Activated T-helper 2 cell treated with anti-CD3 and anti-CD28 coated beads, Interferon-gamma antibody, Interleukin-2, Interleukin-4, amounts not matched to agents 10 μg/mL and 5 μg/mL and 100 μg/mL, durations not matched to agents 14 hours and 24 hours and 36 hours (primary cell): ENCODE measurements at regions of chr6 and their contacts with region 1.

Region 1: DNA sequence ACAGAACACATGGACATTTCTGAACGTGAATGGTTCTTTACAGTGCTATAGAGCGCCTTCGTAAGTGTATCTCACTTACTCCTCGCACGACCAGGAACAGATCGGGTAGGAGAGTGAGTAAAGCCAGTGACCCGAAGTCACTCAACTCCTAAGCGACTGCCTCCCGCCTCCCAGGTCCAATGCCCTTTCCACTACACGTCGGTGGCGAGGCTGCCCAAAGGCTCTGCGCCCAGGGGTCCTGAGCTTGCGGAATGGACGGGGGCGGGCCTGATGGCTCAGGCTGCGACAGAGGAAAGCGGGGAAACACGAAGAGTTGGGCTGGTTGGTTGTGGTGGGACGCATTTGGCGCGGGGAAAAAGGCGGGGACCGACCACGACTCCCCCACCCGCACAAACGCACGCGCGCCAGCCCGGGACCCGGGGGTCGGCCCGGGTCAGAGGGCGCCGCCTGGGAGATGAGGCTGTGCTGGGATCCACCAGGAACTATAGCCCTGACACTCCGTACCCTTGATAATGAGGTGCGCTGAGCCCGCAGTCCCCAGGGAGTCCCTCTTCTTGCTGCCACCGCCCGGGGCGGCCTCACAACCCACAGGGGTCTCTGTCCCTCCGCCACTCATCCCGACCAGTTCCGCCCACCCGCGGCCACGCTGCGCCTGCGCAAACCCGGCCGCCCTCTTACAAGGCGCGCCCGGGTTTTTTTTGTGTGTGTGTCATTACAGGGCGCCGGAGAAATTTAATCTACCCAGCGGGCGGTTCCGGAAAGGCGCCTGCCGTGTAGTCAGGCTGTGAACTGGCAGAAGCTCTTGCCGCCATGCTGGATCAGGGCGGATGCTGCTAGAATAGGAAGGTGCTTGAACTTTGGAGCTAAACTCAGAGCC is at the start of gene BLOC1S5:
- DNase-seq: peak; percentile 95
- H3K4me3 Mint-ChIP-seq: peak within 1 kb of the TSS; percentile 95
- H3K27ac Mint-ChIP-seq: peak within 1 kb of the TSS; percentile 98
- H3K4me1 Mint-ChIP-seq: peaks cover 34% of the 10 kb centered on the region
- H3K27me3 Mint-ChIP-seq: no peaks in the 10 kb centered on the region
- total RNA-seq, gene BLOC1S5: 21.2 and 25.4 TPM in 2 replicates

Region 2: GRCh38 chr6:7312616-7313504 is 751.1 kb before region 1 on chr6 and contains the start of gene SSR1:
- intact Hi-C with region 1: loop called (anchors 2 kb)
- DNase-seq: peak; percentile 95
- H3K4me3 Mint-ChIP-seq: peak within 1 kb of the TSS; percentile 100
- H3K27ac Mint-ChIP-seq: peak within 1 kb of the TSS; percentile 99
- H3K4me1 Mint-ChIP-seq: peaks cover 28% of the 10 kb centered on the region
- H3K27me3 Mint-ChIP-seq: no peaks in the 10 kb centered on the region
- total RNA-seq, gene SSR1: 196 and 203 TPM in 2 replicates

Region 3: GRCh38 chr6:7589949-7590917 is 473.8 kb before region 1 on chr6 and contains the start of gene SNRNP48:
- intact Hi-C with region 1: loop called (anchors 1 kb)
- DNase-seq: peak; percentile 88
- H3K4me3 Mint-ChIP-seq: peak within 1 kb of the TSS; percentile 94
- H3K27ac Mint-ChIP-seq: peak within 1 kb of the TSS; percentile 92
- H3K4me1 Mint-ChIP-seq: peaks cover 28% of the 10 kb centered on the region
- H3K27me3 Mint-ChIP-seq: peaks cover 2% of the 10 kb centered on the region
- total RNA-seq, gene SNRNP48: 16.8 and 17.7 TPM in 2 replicates

Region 4: DNA sequence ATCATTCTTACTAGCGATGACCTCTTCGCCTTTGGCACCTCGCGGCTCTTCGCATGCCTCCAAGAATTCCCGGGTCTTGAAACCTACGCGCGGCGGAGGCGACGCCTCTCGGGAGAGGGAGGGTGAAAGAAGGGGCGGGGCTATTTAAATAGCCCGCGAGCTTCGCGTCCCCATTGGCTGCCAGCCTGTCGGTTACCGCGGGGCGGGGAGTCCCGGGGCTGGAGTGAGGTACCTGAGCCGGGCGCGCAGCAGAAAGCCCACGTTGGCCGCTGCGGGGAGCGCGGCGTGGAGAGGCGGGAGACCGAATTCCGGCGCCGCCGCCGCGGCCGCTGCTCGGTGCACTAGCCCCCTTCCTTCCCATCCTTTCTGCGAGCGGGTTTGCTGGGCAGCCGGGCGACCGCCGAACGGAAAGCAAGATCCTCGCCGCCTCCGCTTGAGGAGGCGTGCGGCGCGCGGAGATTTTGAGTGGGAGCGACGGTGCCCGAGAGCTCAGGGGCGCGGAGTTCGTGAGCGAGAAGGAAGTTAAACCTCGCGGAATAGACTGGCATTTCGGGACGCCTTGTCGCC is 338.1 kb before region 1 on chr6 and contains the start of gene BMP6:
- intact Hi-C with region 1: loop called (anchors 1 kb)
- DNase-seq: peak; percentile 71
- H3K4me3 Mint-ChIP-seq: peak within 1 kb of the TSS; percentile 78
- H3K27ac Mint-ChIP-seq: no peak within 1 kb of the TSS
- H3K4me1 Mint-ChIP-seq: peaks cover 23% of the 10 kb centered on the region
- H3K27me3 Mint-ChIP-seq: peaks cover 69% of the 10 kb centered on the region
- total RNA-seq, gene BMP6: 0.78 and 1.1 TPM in 2 replicates

Region 5: DNA sequence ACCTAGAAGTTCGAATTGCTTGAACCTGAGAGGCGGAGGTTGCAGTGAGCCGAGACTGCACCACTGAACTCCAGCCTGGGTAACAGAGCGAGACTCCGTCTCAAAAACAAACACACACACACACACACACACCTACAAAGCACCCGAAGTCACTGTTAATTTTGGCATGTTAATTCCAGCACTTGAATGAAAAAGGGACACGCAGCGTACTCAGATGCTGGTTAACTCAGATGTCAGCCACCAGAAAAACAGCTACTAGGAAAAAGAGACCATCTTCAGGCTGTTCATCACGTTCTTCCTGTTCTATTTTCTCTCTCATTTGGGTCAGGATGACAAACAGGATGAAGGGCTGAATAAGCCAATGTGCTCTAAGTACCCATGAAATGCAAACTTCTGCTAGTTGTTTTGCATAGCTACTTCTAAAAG is 46.7 kb before region 1 on chr6:
- intact Hi-C with region 1: loop called (anchors 5 kb)
- DNase-seq: no peak
- H3K4me3 Mint-ChIP-seq: peak overlapping the region; percentile 80
- H3K27ac Mint-ChIP-seq: peak overlapping the region; percentile 96
- H3K4me1 Mint-ChIP-seq: peaks cover 20% of the 10 kb centered on the region
- H3K27me3 Mint-ChIP-seq: no peaks in the 10 kb centered on the region

Region 6: GRCh38 chr6:8102122-8102958 is 38.3 kb after region 1 on chr6 and contains the start of gene EEF1E1:
- intact Hi-C with region 1: loop called (anchors 1 kb)
- DNase-seq: peak; percentile 88
- H3K4me3 Mint-ChIP-seq: peak within 1 kb of the TSS; percentile 100
- H3K27ac Mint-ChIP-seq: peak within 1 kb of the TSS; percentile 100
- H3K4me1 Mint-ChIP-seq: peaks cover 25% of the 10 kb centered on the region
- H3K27me3 Mint-ChIP-seq: peaks cover 18% of the 10 kb centered on the region
- total RNA-seq, gene EEF1E1: 83.1 and 87.3 TPM in 2 replicates

Region 7: GRCh38 chr6:8435160-8435852 is 371.3 kb after region 1 on chr6 and contains the start of gene SLC35B3:
- intact Hi-C with region 1: loop called (anchors 2 kb)
- DNase-seq: peak; percentile 98
- H3K4me3 Mint-ChIP-seq: peak within 1 kb of the TSS; percentile 94
- H3K27ac Mint-ChIP-seq: peak within 1 kb of the TSS; percentile 98
- H3K4me1 Mint-ChIP-seq: peaks cover 29% of the 10 kb centered on the region
- H3K27me3 Mint-ChIP-seq: no peaks in the 10 kb centered on the region
- total RNA-seq, gene SLC35B3: 6.3 and 7.0 TPM in 2 replicates